ENCODE measurements at regions of chr4 and their contacts with region 1.

Region 1: DNA sequence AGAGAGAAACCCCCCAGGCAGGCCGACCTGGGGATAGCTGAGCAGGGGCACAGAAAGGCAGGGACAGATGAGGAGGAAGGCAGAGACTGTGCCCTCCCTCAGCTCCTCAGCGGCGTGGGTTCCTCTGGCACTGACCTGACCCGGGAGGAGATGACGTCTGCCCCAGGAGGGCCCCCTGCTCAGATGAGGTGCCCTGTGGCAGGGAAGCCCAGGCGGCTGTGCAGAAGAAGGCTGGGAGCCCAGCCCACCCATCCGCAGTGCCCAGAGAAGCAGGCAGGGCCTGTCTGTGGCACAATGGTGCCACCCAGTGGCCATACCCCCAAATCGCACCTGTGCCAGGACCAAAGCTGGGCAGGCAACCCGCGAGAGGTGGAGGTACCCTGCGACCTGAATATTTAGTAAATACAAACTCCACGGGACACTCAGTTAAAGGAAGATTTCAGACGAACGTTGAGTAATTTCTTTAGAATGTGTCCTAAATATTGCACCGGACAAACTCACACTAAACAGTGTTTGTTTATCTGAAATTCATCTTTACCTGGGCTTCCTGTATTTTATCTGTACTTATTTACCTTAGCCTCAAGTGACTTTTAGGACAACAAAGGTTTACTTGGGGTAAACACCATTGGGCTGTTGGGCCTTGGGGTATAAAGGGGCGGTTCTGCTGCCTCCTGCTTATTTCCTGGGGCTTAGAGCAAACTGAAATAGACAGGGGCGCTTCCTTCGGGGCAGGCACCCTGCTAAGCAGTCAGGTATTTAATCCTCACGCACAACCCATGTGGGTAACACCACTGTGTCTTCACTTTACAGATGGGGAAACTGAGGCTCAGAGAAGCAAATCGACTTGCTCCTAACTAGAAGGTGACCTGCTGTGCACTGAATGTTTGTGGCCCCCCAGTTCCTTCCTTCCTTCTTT is 46.5 kb upstream of the HMX1 start:
- DNase-seq: peak; percentile 50
- H3K4me3 ChIP-seq: no peak overlapping the region
- H3K27ac ChIP-seq: no peak overlapping the region
- H3K4me1 ChIP-seq: no peaks in the 10 kb centered on the region
- H3K27me3 ChIP-seq: peaks cover 5% of the 10 kb centered on the region
- CTCF ChIP-seq: peak; percentile 47 to 80 (median 73)
- EP300 ChIP-seq: no peak
- POLR2A ChIP-seq: no peak

Region 2: DNA sequence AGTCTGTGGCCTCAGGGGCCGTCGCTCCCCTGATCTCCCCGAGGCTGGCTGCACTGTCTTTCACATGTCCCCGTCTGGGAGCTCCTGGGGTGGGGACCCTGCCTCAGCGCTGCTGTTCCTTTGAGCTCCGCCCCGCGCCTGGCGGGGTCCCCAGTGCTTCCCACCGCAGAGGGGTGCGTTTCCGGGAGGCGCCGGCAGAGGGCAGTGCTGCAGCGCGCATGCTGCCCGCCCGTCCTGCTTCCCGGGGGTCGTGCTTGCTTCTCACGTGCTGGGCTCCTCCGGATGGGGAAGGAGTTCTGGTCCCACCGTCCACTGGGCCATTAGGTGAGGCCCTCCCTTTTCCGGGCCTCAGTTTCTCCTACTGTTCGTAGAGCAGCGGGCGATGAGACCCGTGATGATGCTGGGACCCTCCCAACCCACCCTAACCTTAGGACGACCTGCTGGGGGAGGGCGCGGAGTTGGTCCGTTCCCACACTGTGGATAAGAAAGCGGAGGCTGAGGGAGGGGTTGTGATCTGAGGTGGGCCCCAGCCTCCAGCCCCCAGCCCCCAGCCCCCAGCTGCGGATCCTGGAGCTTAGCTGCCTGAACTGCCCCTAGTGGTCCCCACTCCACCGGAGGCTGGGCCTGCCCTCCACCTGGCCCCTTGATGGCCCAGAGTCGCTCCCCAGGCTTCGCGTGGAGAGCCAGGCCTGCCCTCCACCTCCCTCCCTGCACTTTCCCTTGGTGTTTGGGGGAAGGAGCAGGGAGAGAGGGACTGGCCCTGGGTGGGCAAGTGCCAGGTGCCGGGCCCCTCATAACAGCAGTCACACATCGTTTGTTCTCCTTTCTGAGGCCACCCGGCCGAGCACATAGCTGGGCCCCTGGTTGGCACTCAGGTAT is 310.3 kb before region 1 on chr4:
- in situ Hi-C with region 1: no loop called
- intact Hi-C with region 1: loop called (anchors 10 kb)
- DNase-seq: peak; percentile 23
- H3K4me3 ChIP-seq: no peak overlapping the region
- H3K27ac ChIP-seq: no peak overlapping the region
- H3K4me1 ChIP-seq: peaks cover 0 to 6% (median 0%) of the 10 kb centered on the region in 4 donors
- H3K27me3 ChIP-seq: peaks cover 27% of the 10 kb centered on the region
- CTCF ChIP-seq: peak; percentile 75 to 97 (median 96)
- EP300 ChIP-seq: no peak
- POLR2A ChIP-seq: no peak

Region 3: DNA sequence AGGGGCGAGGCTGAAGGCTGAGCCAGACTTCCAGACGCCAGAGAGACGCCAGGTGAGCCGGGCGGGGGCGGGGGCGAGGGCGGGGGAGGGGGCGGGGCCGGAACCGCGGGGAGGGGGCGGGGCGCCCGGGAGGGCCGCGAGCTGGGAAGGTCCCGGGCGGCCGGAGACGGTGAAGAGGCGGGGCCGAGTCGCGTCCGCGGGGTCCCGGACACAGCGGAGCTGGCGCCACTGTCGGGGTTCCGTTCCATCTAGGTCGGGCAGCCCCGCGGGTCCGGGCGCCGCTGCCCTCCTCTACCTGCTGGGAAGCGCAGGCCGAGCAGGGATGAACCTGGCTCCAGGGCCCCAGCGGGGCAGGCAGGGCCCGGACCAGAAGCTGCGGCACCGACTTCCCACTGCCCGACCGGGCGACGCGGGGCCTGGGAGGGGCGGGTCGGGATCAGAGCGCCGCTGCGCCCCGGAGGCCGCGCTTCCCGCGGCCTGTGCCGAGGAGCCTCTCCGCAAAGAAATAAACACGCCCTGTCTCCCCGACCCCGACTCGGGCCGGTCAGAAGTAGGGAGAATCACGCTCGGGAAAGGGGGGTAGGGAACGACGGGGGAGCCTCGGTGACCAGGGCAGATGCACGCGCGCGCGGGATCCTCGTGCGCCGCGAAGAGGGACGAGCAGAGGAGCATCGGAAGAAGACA is 57.1 kb before region 1 on chr4:
- in situ Hi-C with region 1: no loop called
- intact Hi-C with region 1: no loop called
- DNase-seq: no peak
- H3K4me3 ChIP-seq: peak overlapping the region in 1 of 4 donors; percentile 20
- H3K27ac ChIP-seq: no peak overlapping the region
- H3K4me1 ChIP-seq: peaks cover 0 to 25% (median 19%) of the 10 kb centered on the region in 4 donors
- H3K27me3 ChIP-seq: peaks cover 100% of the 10 kb centered on the region
- CTCF ChIP-seq: no peak
- EP300 ChIP-seq: no peak
- POLR2A ChIP-seq: no peak